Left cardiac atrium (tissue), 4 donors: ENCODE measurements at regions of chr5 and their contacts with region 1.

Region 1: GRCh38 chr5:32709781-32710549 is 1.2 kb upstream of the NPR3 start:
- DNase-seq: peak; percentile 76
- ATAC-seq: peak; percentile 62 to 72

Region 2: DNA sequence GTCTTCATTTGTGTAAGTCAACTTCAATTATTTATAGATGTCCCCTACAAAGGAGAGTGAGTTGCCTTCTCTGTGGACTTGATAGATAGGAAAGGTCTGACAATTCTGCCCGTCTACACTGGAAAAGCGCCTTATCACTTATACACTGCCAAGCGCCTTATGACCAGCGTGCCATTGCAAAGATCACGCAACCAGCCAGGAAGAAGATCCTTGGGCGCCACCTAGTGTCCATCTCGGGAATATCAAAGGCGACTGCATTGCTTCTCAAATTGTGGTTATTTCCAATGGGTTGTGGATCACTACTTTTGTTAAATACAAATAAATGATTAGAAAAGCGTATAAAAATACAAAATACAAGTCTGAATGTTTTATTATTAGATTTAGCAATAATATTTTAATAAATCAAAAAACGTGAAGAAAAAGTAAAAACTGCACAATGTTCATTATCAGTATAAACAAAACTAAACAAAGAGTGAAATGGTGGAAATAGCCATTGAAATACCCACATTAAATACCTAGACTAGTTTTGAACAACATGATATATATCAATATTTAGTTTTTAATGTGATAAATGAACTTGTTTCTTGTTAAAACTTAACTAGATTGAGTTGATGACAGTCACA is 96.8 kb before region 1 on chr5:
- intact Hi-C with region 1: no loop called
- DNase-seq: peak; percentile 80
- ATAC-seq: peak; percentile 71 to 74

Region 3: DNA sequence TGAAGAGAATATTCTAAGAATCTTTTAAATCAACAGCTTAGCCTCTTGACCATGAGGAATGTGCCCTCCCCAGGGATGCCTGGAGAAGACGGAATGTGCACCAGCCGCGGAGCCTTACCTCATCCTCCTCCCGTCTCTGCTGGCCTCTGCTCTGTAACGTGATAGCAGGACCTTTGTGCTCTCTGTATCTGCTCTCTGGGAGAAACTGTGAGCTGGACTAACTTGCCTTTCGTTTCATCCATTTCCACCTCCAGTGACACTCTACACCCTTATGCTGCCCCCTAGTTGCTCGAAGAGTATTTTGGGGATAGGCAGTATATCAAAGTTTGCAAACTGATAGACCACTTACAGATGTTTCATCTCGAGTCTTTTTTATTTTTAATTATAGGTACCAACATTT is 142.6 kb after region 1 on chr5:
- intact Hi-C with region 1: loop called in 1 of 2 experiments (anchors 10 kb)
- DNase-seq: peak; percentile 46
- ATAC-seq: peak; percentile 79 to 85

Region 4: DNA sequence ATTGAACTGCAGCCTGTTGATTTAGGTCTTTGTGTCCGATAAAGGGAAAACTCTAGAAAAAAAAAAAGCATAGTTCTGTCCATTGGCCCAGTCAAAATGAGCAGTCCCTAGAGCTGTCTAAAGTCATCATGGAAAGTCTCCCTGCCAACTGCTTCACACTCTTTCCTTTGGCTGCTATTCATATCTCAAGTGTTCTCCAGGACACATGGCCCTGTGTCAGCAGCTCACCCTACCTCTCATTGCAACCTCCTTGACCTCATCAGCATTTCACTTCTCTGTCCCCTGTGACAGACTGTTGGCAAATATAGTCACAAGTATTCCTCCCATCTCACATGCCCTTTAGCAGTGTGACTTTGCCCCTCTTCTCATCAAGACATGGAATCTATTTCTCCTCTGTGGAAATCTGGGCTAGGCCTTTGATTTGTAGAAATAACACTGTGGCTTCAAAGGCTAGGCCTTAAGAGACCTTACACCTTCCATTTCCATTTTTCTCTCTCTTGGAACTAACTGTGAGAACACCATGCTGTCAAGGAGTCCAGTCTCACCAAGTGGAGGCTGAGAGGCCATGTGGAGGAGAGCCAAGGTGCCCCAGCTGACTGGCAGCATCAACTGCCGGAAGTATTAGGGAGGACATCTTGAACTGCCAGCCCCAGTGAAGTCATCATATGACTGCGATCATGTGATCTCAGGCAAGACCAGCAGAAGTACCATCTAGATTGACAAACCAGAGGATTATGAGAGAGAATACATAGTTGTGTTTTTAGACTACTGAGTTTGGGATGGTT is 581.4 kb after region 1 on chr5:
- intact Hi-C with region 1: loop called in 1 of 2 experiments (anchors 5 kb)
- DNase-seq: peak; percentile 27
- ATAC-seq: peak; percentile 98 to 99

Region 5: DNA sequence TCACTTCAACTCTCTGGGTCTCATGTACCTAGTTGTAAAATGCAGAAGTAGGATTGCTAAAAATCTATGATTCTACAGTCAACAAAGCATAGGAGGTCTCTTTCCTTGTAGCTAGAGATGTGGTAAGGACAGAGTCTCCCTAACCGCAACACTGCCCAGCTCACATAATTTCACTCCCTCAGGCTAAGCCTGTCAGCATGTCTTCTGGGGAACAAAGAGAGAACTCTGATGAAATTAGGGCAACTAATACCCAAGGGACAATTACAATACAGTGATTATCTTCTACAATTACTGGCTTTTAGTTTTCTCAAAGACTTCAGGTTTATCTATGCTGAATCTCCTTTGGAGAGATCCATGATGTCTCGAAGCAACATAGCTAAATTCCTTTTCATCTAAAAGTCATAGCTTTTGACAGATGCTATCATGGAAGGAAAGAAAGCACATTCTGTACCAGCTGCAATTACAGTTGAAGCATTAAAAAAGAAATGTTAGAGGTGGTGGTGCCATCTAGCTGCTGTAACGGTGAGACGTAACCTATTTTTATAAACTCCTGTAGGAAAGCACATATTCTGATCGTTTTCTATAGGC is 589.8 kb after region 1 on chr5:
- intact Hi-C with region 1: loop called in 1 of 2 experiments (anchors 5 kb)
- DNase-seq: no peak
- ATAC-seq: peak; percentile 68 to 80

Region 6: GRCh38 chr5:33423018-33423630 is 713.2 kb after region 1 on chr5:
- intact Hi-C with region 1: loop called in 1 of 2 experiments (anchors 10 kb)
- DNase-seq: no peak
- ATAC-seq: peak in 1 of 2 donors; percentile 18